ENCODE measurements at regions of chr1 and their contacts with region 1.

Region 1: GRCh38 chr1:182601416-182601786 is 2.8 kb downstream of the RGS16 start:
- DNase-seq: peak; percentile 69
- ATAC-seq: peak; percentile 45
- H3K4me3 ChIP-seq: peak overlapping the region; percentile 66
- H3K27ac ChIP-seq: peak overlapping the region; percentile 85
- H3K4me1 ChIP-seq: peaks cover 35% of the 10 kb centered on the region
- H3K27me3 ChIP-seq: no peaks in the 10 kb centered on the region
- CTCF ChIP-seq: peak; percentile 86

Region 2: DNA sequence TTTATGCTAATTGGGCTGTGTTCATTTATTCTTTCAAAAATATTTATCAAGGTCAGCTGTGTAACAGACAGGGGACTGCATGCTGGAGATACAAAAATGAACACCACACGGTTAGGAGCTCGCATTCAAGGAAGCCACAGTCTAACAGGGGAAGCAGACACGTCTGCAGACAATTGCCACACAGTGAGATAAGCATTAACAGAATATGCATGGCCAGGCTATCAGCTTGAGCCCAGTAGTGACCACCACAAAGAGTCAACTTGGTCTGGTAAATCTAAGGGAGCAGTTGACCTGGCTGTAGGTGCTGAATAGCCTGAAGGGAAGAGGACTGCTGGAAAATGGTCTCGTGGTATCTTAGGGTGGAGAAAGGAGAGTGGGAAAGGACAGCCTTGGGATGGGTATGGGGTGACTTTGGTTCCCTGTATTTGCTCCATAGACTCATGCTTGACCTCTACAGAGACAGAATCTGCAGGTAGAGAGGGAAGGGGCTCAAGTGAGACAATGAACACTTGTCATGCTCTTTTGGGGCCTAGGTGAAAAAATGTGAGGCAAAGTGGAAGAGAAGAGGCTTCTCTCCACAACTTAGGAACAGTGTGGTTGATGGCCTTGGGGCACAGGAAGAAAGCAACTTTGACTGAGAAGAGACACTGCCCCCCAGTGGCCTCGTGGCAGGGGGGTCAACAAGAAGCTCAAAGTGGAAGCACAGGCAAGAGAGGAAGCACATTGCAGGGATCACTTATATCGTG is 180.6 kb after region 1 on chr1:
- intact Hi-C with region 1: loop called (anchors 2 kb)
- DNase-seq: peak; percentile 80
- ATAC-seq: peak; percentile 88
- H3K4me3 ChIP-seq: no peak overlapping the region
- H3K27ac ChIP-seq: no peak overlapping the region
- H3K4me1 ChIP-seq: no peaks in the 10 kb centered on the region
- H3K27me3 ChIP-seq: no peaks in the 10 kb centered on the region
- CTCF ChIP-seq: peak; percentile 77

Measured in upper lobe of right lung (tissue), 1 donor.